ENCODE measurements at regions of chr18 and their contacts with region 1.

Region 1: GRCh38 chr18:10519999-10520935 is 5.6 kb upstream of the NAPG start:
- DNase-seq: peak; percentile 81
- H3K4me3 ChIP-seq: no peak overlapping the region
- H3K27ac ChIP-seq: no peak overlapping the region
- H3K4me1 ChIP-seq: peaks cover 2% of the 10 kb centered on the region
- H3K27me3 ChIP-seq: no peaks in the 10 kb centered on the region
- CTCF ChIP-seq: peak; percentile 68

Region 2: GRCh38 chr18:9753863-9754262 is 766.4 kb before region 1 on chr18:
- intact Hi-C with region 1: no loop called
- DNase-seq: no peak
- H3K4me3 ChIP-seq: no peak overlapping the region
- H3K27ac ChIP-seq: no peak overlapping the region
- H3K4me1 ChIP-seq: no peaks in the 10 kb centered on the region
- H3K27me3 ChIP-seq: no peaks in the 10 kb centered on the region
- CTCF ChIP-seq: no peak

Region 3: GRCh38 chr18:9971313-9971920 is 548.9 kb before region 1 on chr18:
- intact Hi-C with region 1: loop called (anchors 2 kb)
- DNase-seq: peak; percentile 81
- H3K4me3 ChIP-seq: no peak overlapping the region
- H3K27ac ChIP-seq: no peak overlapping the region
- H3K4me1 ChIP-seq: no peaks in the 10 kb centered on the region
- H3K27me3 ChIP-seq: no peaks in the 10 kb centered on the region
- CTCF ChIP-seq: peak; percentile 72

Region 4: GRCh38 chr18:10798727-10799308 is 278.6 kb after region 1 on chr18:
- intact Hi-C with region 1: no loop called
- DNase-seq: no peak
- H3K4me3 ChIP-seq: no peak overlapping the region
- H3K27ac ChIP-seq: no peak overlapping the region
- H3K4me1 ChIP-seq: no peaks in the 10 kb centered on the region
- H3K27me3 ChIP-seq: no peaks in the 10 kb centered on the region
- CTCF ChIP-seq: no peak

Region 5: DNA sequence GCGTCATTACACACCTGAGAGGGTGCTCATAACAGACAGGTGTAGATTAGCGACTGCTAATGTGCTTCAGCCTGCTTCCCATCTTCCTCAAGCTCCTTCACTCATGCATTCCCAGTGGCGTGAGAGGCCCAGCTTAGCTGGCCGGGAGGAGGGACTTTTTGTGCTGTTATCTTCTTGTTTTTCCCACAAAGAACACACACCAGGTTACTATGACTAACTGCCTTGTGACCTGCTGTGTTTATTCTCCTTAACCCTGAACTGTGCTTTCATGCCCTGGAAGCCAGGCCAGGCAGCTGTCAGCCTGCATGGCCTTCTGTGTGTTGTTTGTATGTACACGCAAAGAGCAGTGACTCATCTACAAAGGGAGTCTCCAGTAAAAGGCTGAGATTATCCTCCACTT is 485.3 kb after region 1 on chr18:
- intact Hi-C with region 1: no loop called
- DNase-seq: peak; percentile 42
- H3K4me3 ChIP-seq: no peak overlapping the region
- H3K27ac ChIP-seq: no peak overlapping the region
- H3K4me1 ChIP-seq: no peaks in the 10 kb centered on the region
- H3K27me3 ChIP-seq: no peaks in the 10 kb centered on the region
- CTCF ChIP-seq: no peak

Measured in colonic mucosa (tissue), 4 donors.